CD8-positive, alpha-beta memory T cell (primary cell): ENCODE measurements at regions of chr19 and their contacts with region 1.

Region 1: DNA sequence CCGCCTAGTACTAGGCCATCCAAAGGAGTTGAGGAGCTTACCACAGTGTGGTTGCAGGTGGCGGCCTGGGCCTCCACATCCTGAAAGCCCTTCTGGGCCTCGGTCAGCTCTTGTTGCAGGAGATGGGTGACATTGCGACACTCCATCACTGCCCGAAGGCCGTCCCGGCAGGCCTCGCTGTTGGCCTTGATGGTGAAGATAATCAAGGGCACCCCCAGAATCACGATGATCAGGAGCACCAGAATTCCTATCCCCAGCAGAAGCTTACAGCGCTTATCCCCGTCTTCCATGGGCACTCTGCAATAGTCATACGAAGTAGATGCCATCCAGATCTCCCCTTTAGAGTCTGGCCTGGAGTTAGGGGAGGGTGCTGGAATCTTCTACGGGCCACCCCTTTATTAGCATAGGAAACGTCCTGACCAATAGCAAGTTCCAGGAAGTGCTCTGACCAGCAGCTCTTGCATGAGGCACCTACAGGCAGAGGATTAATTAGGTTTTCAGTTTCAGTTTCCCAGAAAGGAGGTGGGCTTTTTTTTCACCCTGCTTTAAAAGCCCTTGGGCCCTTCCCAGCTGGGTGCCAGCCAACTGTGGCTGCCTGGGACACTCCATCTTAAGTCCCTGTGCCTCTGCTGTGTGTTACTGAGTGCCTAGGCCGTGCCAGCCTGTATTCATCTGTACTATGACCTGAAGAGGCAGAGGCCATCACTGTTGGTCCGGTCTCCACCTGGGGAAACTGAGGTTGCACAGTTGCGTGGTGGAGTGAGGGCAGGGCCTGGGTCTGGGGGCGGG is at the start of gene BST2:
- DNase-seq: peak; percentile 42 to 74 (median 67)
- H3K4me3 ChIP-seq: peak within 1 kb of the TSS; percentile 76
- H3K4me3 Mint-ChIP-seq: peak within 1 kb of the TSS; percentile 90 to 98 (median 95)
- H3K27ac ChIP-seq: peak within 1 kb of the TSS; percentile 86
- H3K27ac Mint-ChIP-seq: peak within 1 kb of the TSS; percentile 87 to 99 (median 92)
- H3K4me1 ChIP-seq: peaks cover 17% of the 10 kb centered on the region
- H3K4me1 Mint-ChIP-seq: peaks cover 35 to 49% (median 36%) of the 10 kb centered on the region in 3 donors
- H3K27me3 ChIP-seq: no peaks in the 10 kb centered on the region
- H3K27me3 Mint-ChIP-seq: no peaks in the 10 kb centered on the region
- total RNA-seq, gene BST2: 116 to 124 TPM

Region 2: GRCh38 chr19:17390665-17391370 is 14.6 kb before region 1 on chr19:
- CTCF ChIA-PET with region 1: interaction called, 21 read pairs
- POLR2A ChIA-PET with region 1: interaction called, 10 read pairs
- DNase-seq: peak; percentile 81 to 88 (median 86)
- H3K4me3 ChIP-seq: peak overlapping the region; percentile 64
- H3K4me3 Mint-ChIP-seq: peak overlapping the region; percentile 76 to 94 (median 89)
- H3K27ac ChIP-seq: no peak overlapping the region
- H3K27ac Mint-ChIP-seq: peak overlapping the region in 3 of 8 donors; percentile 48 to 86 (median 61)
- H3K4me1 ChIP-seq: peaks cover 20% of the 10 kb centered on the region
- H3K4me1 Mint-ChIP-seq: peaks cover 15 to 29% (median 20%) of the 10 kb centered on the region in 3 donors
- H3K27me3 ChIP-seq: no peaks in the 10 kb centered on the region
- H3K27me3 Mint-ChIP-seq: peaks cover 0 to 2% of the 10 kb centered on the region in 2 donors

Region 3: GRCh38 chr19:17419621-17420466 is 14.4 kb after region 1 on chr19 and contains the start of gene MVB12A:
- CTCF ChIA-PET with region 1: interaction called, 11 read pairs
- POLR2A ChIA-PET with region 1: interaction called, 25 read pairs
- DNase-seq: peak; percentile 92 to 97 (median 95)
- H3K4me3 ChIP-seq: peak within 1 kb of the TSS; percentile 80
- H3K4me3 Mint-ChIP-seq: peak within 1 kb of the TSS; percentile 89 to 97 (median 92)
- H3K27ac ChIP-seq: peak within 1 kb of the TSS; percentile 61
- H3K27ac Mint-ChIP-seq: peak within 1 kb of the TSS; percentile 88 to 98 (median 92)
- H3K4me1 ChIP-seq: peaks cover 15% of the 10 kb centered on the region
- H3K4me1 Mint-ChIP-seq: peaks cover 14 to 20% (median 18%) of the 10 kb centered on the region in 3 donors
- H3K27me3 ChIP-seq: no peaks in the 10 kb centered on the region
- H3K27me3 Mint-ChIP-seq: no peaks in the 10 kb centered on the region
- total RNA-seq, gene MVB12A: 34.5 to 39.2 TPM

Region 4: DNA sequence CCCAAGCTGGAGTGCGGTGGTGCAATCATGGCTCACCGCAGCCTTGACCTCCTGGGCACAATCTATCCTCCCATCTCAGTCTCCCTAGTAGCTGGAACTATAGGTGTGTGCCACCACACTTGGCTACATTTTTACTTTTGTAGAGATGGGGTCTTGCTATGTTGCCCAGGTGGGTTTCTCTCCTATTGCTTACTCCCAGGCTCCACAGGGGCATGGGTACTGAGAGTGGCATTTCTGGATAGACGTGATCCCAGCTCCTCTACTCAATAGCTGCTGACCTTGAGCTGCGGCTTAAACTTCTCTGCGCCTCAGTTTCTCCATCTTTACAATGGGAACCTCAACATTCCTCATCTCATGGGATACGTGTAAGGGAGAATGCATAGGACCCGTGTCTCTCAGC is 26.0 kb after region 1 on chr19:
- CTCF ChIA-PET with region 1: no interaction called
- POLR2A ChIA-PET with region 1: no interaction called
- DNase-seq: no peak
- H3K4me3 ChIP-seq: no peak overlapping the region
- H3K4me3 Mint-ChIP-seq: no peak overlapping the region
- H3K27ac ChIP-seq: no peak overlapping the region
- H3K27ac Mint-ChIP-seq: peak overlapping the region in 2 of 8 donors; percentile 2 to 69
- H3K4me1 ChIP-seq: no peaks in the 10 kb centered on the region
- H3K4me1 Mint-ChIP-seq: no peaks in the 10 kb centered on the region
- H3K27me3 ChIP-seq: no peaks in the 10 kb centered on the region
- H3K27me3 Mint-ChIP-seq: no peaks in the 10 kb centered on the region